ENCODE measurements at regions of chr19 and their contacts with region 1.

Region 1: DNA sequence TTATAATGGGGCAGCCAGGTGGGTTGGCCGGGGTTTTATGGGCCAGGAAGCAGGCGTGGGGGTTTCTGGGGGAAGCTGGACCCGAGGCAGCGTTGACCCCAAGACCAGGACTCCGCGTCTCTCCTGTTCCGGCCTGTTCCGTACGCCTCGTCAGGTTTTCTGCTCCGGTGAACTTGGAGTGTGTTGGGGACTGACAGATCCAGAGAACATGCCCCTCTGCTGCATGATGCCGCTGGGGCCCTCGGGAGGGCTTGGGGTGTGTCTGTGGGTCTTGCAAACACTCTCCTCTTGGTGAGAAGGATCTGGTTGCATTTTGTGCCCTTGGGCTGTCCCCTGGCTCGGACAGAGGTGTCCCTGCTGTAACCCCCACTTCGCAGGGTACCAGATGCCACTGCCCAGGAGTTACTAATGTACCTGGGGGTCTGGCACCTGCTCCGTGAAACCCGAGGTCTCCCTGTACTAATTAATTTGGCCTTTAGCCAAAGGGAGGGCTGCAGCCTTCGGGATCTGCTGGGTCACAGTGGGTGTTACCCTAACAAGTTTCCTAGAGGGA is 15.6 kb downstream of the KDM4B start:
- DNase-seq: no peak
- CTCF ChIP-seq: no peak

Region 2: GRCh38 chr19:3932931-3933810 is 1051.3 kb before region 1 on chr19 and contains the start of gene NMRK2:
- CTCF ChIA-PET with region 1: no interaction called
- POLR2A ChIA-PET with region 1: no interaction called
- DNase-seq: peak; percentile 34
- CTCF ChIP-seq: no peak

Region 3: DNA sequence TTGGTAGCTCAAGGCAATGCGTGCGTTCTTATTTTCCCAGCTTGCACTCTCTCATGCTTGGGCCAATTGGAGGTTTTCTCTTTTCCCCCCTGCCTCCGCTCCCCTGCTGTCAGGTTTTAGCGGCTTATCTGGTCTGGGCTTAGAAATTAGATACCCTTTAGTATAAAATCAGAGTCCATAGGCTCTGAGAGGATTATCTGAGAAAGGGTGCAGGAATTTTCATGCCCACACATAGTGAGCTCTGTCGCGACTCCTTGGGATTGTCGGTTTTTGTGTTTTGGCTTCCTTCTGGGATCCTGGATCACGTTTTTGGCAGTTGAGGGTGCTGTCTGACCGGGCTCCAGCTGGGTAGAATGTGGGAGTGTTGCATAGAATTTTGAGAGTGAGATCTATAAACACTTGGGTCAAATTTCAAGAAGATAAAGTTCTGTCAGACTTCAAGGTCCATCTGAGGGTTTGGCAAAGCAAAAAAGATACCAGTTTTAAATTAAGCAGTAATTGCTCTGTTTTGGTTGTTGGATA is 569.7 kb before region 1 on chr19:
- CTCF ChIA-PET with region 1: no interaction called
- POLR2A ChIA-PET with region 1: no interaction called
- DNase-seq: no peak
- CTCF ChIP-seq: no peak

Region 4: GRCh38 chr19:5001615-5002014 is 17.1 kb after region 1 on chr19:
- CTCF ChIA-PET with region 1: interaction called, 14 read pairs
- POLR2A ChIA-PET with region 1: no interaction called
- DNase-seq: peak; percentile 58
- CTCF ChIP-seq: peak; percentile 60

Region 5: GRCh38 chr19:5011476-5012238 is 27.1 kb after region 1 on chr19:
- CTCF ChIA-PET with region 1: no interaction called
- POLR2A ChIA-PET with region 1: no interaction called
- DNase-seq: no peak
- CTCF ChIP-seq: no peak

Region 6: GRCh38 chr19:5216141-5216847 is 231.8 kb after region 1 on chr19:
- CTCF ChIA-PET with region 1: no interaction called
- POLR2A ChIA-PET with region 1: no interaction called
- DNase-seq: peak; percentile 69
- CTCF ChIP-seq: no peak